CD4-positive, alpha-beta memory T cell (primary cell): ENCODE measurements at regions of chr6 and their contacts with region 1.

Region 1: DNA sequence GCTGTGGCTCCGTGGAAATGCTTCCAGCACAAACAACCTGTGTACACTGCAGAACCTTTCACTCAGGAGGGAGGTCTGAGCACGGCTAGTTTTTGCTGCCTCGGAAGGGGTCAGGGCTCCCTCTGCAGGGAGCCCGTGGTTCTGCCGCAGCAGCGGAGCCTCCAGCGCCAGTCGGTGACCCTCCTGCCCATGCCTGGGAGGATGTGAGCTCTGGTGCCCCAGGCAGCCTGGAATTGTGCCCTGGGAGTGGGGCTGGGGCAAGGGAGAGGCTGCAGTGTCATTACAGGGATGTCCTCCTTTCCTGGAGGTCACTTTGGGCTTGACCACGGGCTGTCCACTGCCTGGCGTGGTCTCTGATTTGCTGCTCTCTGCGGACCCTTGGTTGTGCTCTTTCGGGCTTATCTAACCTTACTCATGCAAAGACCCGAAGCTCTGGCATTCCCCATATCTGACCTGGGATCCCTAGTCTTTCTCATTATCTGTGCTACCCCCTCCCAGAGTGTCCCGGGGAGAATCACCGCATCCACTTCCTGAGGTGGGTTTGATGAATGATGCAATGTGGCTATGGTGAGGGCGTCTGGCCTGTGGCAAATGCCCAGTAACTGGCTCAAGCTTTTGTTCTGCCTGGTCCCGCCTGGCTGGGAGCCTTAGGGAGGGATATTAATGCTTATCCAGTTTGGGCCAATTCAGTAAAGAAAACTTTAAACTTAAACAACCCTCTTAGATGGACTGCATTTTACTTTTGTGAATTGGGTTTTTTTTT is 59.6 kb upstream of the TAGAP start:
- DNase-seq: peak; percentile 75 to 81 (median 78)
- H3K4me3 ChIP-seq: no peak overlapping the region
- H3K4me3 Mint-ChIP-seq: peak overlapping the region; percentile 54 to 82 (median 71)
- H3K27ac ChIP-seq: peak overlapping the region; percentile 25
- H3K27ac Mint-ChIP-seq: peak overlapping the region; percentile 48 to 95 (median 86)
- H3K4me1 ChIP-seq: peaks cover 74% of the 10 kb centered on the region
- H3K4me1 Mint-ChIP-seq: peaks cover 57 to 85% (median 66%) of the 10 kb centered on the region in 4 donors
- H3K27me3 ChIP-seq: no peaks in the 10 kb centered on the region
- H3K27me3 Mint-ChIP-seq: no peaks in the 10 kb centered on the region

Region 2: DNA sequence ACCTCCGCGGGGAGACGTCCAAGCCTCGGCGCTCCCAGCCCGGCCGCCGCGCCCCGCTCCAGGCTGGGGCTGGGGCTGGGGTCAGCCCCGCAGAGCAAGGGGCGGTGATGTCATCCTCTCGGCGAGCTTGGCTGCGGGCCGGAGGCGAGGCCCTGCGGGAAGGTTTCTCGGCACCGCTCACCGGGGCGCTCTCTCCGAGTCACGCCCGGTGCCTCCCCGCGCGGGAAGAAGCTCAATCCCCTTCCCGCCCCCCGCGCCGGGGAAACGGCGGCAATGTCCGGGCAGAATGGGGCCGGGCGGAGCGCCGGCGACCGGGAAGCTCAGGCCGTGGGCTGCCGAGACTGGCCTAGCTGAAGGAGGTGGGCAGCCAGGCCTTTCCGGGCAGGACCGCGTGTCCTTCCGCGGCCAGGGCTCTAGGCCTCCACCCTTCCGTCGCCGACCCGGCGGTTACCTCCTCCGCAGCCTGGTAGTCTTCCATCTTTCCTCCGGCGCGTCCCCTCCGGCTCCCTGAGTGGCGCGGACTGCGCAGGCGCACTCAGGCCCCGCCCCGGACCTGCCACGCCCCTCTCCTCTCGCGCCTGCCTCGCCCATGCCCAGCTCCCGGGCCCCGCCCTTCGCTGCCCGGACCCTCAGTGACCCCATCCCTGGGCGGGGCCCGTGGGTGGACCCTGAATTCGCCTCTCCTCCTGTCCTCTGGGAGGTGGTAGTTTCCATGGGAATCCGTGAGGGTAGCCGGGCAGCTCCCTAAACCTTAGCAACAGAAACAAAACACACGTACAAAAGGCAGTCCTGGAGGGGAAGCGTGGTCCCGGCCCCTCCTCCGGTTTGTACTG is 459.9 kb before region 1 on chr6 and contains the start of gene DYNLT1:
- CTCF ChIA-PET with region 1: no interaction called
- POLR2A ChIA-PET with region 1: interaction called, 10 read pairs
- intact Hi-C with region 1: no loop called
- DNase-seq: peak; percentile 78 to 95 (median 88)
- H3K4me3 ChIP-seq: peak within 1 kb of the TSS; percentile 84 to 85
- H3K4me3 Mint-ChIP-seq: peak within 1 kb of the TSS; percentile 99 to 100 (median 99)
- H3K27ac ChIP-seq: peak within 1 kb of the TSS; percentile 96
- H3K27ac Mint-ChIP-seq: peak within 1 kb of the TSS; percentile 92 to 100 (median 99)
- H3K4me1 ChIP-seq: peaks cover 58% of the 10 kb centered on the region
- H3K4me1 Mint-ChIP-seq: peaks cover 46 to 82% (median 55%) of the 10 kb centered on the region in 4 donors
- H3K27me3 ChIP-seq: no peaks in the 10 kb centered on the region
- H3K27me3 Mint-ChIP-seq: no peaks in the 10 kb centered on the region
- total RNA-seq, gene DYNLT1: 78.8 to 90.4 TPM

Region 3: GRCh38 chr6:158894193-158894592 is 210.2 kb before region 1 on chr6:
- CTCF ChIA-PET with region 1: no interaction called
- POLR2A ChIA-PET with region 1: no interaction called
- intact Hi-C with region 1: no loop called
- DNase-seq: no peak
- H3K4me3 ChIP-seq: no peak overlapping the region
- H3K4me3 Mint-ChIP-seq: no peak overlapping the region
- H3K27ac ChIP-seq: no peak overlapping the region
- H3K27ac Mint-ChIP-seq: no peak overlapping the region
- H3K4me1 ChIP-seq: no peaks in the 10 kb centered on the region
- H3K4me1 Mint-ChIP-seq: peaks cover 0 to 2% (median 0%) of the 10 kb centered on the region in 4 donors
- H3K27me3 ChIP-seq: no peaks in the 10 kb centered on the region
- H3K27me3 Mint-ChIP-seq: no peaks in the 10 kb centered on the region

Region 4: GRCh38 chr6:159008656-159009288 is 95.6 kb before region 1 on chr6:
- CTCF ChIA-PET with region 1: interaction called, 676 read pairs
- POLR2A ChIA-PET with region 1: interaction called, 144 read pairs
- intact Hi-C with region 1: loop called (anchors 1 kb)
- DNase-seq: peak; percentile 54 to 68 (median 66)
- H3K4me3 ChIP-seq: peak overlapping the region in 1 of 2 donors; percentile 29
- H3K4me3 Mint-ChIP-seq: peak overlapping the region; percentile 64 to 77 (median 72)
- H3K27ac ChIP-seq: no peak overlapping the region
- H3K27ac Mint-ChIP-seq: peak overlapping the region; percentile 7 to 90 (median 77)
- H3K4me1 ChIP-seq: peaks cover 44% of the 10 kb centered on the region
- H3K4me1 Mint-ChIP-seq: peaks cover 37 to 55% (median 47%) of the 10 kb centered on the region in 4 donors
- H3K27me3 ChIP-seq: no peaks in the 10 kb centered on the region
- H3K27me3 Mint-ChIP-seq: no peaks in the 10 kb centered on the region

Region 5: DNA sequence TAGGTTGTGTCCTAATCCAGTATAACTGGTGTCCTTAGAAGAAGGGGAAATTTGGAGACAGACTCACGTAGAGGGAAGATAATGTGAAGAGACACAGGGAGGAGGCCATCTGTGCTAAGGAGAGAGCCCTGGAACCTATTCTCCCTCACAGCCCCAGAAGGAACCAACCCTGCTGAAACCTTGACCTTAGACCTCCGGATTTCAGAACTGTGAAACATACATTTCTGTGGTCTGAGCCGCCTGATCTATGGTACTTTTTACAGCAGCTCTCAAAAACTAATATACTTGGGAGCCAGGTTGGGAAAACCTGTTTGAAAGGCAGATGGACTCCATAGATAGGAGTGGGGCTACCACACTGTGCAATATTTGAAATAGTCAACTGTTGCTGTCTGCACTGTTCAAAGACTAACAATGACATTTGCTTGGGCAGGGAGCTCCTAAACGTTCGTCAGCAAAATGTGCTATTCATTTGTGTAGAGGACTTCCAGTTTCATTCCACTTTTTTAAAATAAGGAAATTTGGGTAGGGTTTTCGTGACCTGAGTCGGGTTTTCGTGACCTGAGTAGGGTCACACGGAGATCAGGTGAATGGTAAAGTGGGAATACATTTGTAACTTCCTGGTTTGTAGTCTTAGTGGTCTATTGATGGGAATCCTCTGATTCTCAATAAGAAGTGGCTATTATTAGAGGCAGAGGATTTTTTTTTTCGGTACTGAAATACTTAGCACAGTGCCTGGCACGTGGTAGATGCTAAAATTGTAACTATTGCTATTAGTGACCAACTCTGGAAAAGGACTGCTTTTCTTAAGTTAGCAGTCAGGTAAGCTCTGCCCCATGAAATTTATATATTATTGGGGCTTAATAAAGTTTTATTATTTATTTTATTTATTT is 70.9 kb before region 1 on chr6:
- CTCF ChIA-PET with region 1: interaction called, 333 read pairs
- POLR2A ChIA-PET with region 1: interaction called, 16 read pairs
- intact Hi-C with region 1: no loop called
- DNase-seq: no peak
- H3K4me3 ChIP-seq: no peak overlapping the region
- H3K4me3 Mint-ChIP-seq: no peak overlapping the region
- H3K27ac ChIP-seq: no peak overlapping the region
- H3K27ac Mint-ChIP-seq: peak overlapping the region in 6 of 7 donors; percentile 48 to 86 (median 64)
- H3K4me1 ChIP-seq: peaks cover 38% of the 10 kb centered on the region
- H3K4me1 Mint-ChIP-seq: peaks cover 23 to 51% (median 37%) of the 10 kb centered on the region in 4 donors
- H3K27me3 ChIP-seq: no peaks in the 10 kb centered on the region
- H3K27me3 Mint-ChIP-seq: no peaks in the 10 kb centered on the region

Region 6: GRCh38 chr6:159062564-159062945 is 41.8 kb before region 1 on chr6:
- CTCF ChIA-PET with region 1: interaction called, 68 read pairs
- POLR2A ChIA-PET with region 1: interaction called, 109 read pairs
- intact Hi-C with region 1: loop called (anchors 1 kb)
- DNase-seq: peak; percentile 80 to 87 (median 83)
- H3K4me3 ChIP-seq: no peak overlapping the region
- H3K4me3 Mint-ChIP-seq: peak overlapping the region; percentile 44 to 80 (median 72)
- H3K27ac ChIP-seq: peak overlapping the region; percentile 57
- H3K27ac Mint-ChIP-seq: peak overlapping the region; percentile 88 to 99 (median 98)
- H3K4me1 ChIP-seq: peaks cover 87% of the 10 kb centered on the region
- H3K4me1 Mint-ChIP-seq: peaks cover 66 to 91% (median 79%) of the 10 kb centered on the region in 4 donors
- H3K27me3 ChIP-seq: no peaks in the 10 kb centered on the region
- H3K27me3 Mint-ChIP-seq: no peaks in the 10 kb centered on the region

Region 7: GRCh38 chr6:159125014-159125609 is 20.8 kb after region 1 on chr6:
- CTCF ChIA-PET with region 1: interaction called, 21 read pairs
- POLR2A ChIA-PET with region 1: interaction called, 5 read pairs
- intact Hi-C with region 1: no loop called
- DNase-seq: no peak
- H3K4me3 ChIP-seq: no peak overlapping the region
- H3K4me3 Mint-ChIP-seq: no peak overlapping the region
- H3K27ac ChIP-seq: no peak overlapping the region
- H3K27ac Mint-ChIP-seq: no peak overlapping the region
- H3K4me1 ChIP-seq: no peaks in the 10 kb centered on the region
- H3K4me1 Mint-ChIP-seq: no peaks in the 10 kb centered on the region
- H3K27me3 ChIP-seq: no peaks in the 10 kb centered on the region
- H3K27me3 Mint-ChIP-seq: peaks cover 0 to 1% of the 10 kb centered on the region in 2 donors

Region 8: DNA sequence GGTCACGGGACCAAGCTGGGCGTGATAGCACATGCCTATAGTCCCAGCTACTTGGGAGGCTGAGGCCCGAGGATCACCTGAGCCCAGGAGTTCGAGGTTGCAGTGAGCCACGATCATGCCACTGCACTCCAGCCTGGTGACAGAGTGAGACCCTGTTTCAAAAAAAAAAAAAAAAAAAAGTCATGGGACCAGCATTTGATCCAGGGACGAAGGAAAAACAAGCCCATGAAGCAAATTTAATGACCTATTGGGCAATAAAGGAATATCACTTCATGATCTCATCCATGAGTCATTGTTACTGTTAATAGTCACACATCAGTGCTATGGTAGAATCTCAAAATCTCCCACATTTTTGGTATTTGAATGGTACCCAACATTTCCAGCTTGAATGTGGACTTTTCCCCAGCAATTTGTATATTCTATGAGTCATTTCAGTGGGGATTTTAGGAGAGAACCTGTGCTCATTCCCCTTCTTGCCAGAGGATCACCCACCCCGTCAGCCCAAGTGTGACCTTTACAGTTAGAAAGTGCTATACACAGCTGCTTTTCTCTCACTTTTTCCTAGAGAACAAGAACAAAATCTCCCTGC is 597.2 kb after region 1 on chr6:
- CTCF ChIA-PET with region 1: no interaction called
- POLR2A ChIA-PET with region 1: no interaction called
- intact Hi-C with region 1: no loop called
- DNase-seq: no peak
- H3K4me3 ChIP-seq: no peak overlapping the region
- H3K4me3 Mint-ChIP-seq: no peak overlapping the region
- H3K27ac ChIP-seq: no peak overlapping the region
- H3K27ac Mint-ChIP-seq: no peak overlapping the region
- H3K4me1 ChIP-seq: no peaks in the 10 kb centered on the region
- H3K4me1 Mint-ChIP-seq: peaks cover 2 to 8% (median 4%) of the 10 kb centered on the region in 4 donors
- H3K27me3 ChIP-seq: no peaks in the 10 kb centered on the region
- H3K27me3 Mint-ChIP-seq: no peaks in the 10 kb centered on the region